Activated CD8-positive, alpha-beta T cell treated with anti-CD3 and anti-CD28 coated beads, Interleukin-2, amount 10 ng/mL, durations not matched to agents 7 days and 5 days (primary cell): ENCODE measurements at regions of chr1 and their contacts with region 1.

Region 1: DNA sequence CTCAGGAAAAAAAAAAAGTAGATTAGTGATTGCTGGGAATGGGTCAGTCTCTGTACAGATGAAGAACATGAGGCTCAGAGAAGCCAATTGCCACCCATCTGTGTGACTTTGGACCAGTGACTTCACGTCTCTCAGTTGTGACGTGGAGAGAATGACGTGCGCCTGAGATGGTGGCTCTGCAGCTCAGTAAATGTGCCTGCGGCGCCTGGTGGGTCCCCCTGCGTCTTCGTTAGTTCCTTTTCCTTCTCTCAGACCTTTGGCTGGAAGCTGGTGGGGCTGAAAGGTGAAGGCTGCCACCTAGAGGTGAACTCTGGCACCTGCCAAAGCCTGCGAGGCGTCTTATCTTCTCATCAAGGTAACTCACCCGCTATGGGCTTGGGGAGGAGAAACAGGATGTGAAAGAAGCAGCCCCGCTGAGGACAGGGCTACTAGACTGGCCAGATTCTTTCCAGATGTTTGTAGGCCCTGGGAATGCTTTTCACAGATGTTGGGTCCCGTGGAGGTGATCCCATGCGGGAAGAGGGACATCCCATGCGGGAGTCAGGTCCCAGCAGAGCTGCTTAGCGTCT is 8.7 kb upstream of the E2F2 start:
- DNase-seq: peak; percentile 97
- ATAC-seq: peak; percentile 97
- H3K4me3 Mint-ChIP-seq: peak overlapping the region; percentile 5
- H3K27ac Mint-ChIP-seq: peak overlapping the region; percentile 64
- H3K4me1 Mint-ChIP-seq: peaks cover 21% of the 10 kb centered on the region
- H3K27me3 Mint-ChIP-seq: no peaks in the 10 kb centered on the region

Region 2: DNA sequence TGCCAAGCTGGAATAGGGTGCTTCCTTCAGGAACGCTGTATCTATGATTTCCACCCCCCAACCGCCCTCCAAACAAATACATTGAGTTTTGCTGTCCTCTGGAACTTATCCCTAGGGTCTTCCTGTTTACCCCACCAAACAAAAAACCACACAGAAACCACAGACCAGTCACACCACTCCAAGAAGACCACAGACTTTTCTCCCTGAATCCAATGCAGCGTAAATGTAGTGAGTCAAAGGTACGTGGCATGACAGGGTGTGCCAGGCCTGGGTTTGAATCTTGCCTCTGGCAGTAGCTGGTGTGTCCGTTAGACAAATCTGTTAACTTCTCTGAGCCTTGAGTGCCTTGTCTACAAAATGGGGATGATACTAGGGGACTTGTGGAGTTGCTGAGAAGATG is 83.6 kb before region 1 on chr1:
- CTCF ChIA-PET with region 1: no interaction called
- POLR2A ChIA-PET with region 1: no interaction called
- DNase-seq: no peak
- ATAC-seq: no peak
- H3K4me3 Mint-ChIP-seq: no peak overlapping the region
- H3K27ac Mint-ChIP-seq: no peak overlapping the region
- H3K4me1 Mint-ChIP-seq: peaks cover 18% of the 10 kb centered on the region
- H3K27me3 Mint-ChIP-seq: peaks cover 15% of the 10 kb centered on the region

Region 3: DNA sequence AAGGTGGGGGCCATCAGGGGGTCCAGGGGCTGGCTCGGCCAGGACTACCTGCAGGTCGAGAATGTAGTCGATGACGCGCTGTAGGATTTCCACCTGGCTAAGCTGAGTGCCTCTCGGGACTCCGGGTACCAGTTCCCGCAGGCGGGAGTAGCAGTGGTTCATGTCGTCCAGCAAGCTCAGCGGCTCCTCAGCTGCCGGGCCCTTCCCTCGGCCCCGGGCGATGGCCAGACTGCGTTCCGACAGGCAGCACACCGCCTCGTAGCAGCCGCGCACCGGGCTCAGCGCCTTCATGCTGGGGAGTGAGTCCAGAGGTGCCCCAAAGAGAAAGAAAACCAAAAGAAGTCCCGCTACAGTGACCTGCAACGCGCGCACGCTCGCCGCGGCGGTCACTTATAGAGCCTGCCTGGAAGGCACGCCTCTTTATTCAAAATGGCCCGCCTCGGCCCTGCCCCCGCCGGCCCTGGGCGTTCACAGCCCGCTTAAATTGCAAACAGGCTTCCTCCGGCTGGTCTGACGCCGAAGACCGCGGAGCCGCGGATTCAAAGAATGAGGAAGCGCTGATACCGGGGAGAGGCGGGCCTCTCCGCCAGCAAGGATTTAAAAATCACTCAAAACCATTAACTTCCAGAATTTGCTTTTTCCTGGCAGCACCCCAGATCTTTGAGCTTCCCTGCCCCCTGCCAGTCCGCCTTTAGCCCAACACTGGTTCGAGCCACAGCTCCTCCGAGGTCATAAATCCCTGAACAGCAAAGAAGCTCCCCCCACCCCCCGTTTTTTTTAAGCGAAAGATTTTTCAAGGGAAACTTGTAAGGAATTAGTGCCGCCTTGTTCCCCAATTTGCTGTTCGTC is 19.6 kb after region 1 on chr1 and contains the start of gene ID3:
- CTCF ChIA-PET with region 1: interaction called, 36 read pairs
- POLR2A ChIA-PET with region 1: interaction called, 3 read pairs
- DNase-seq: peak; percentile 97
- ATAC-seq: peak; percentile 74
- H3K4me3 Mint-ChIP-seq: peak within 1 kb of the TSS; percentile 95
- H3K27ac Mint-ChIP-seq: peak within 1 kb of the TSS; percentile 87
- H3K4me1 Mint-ChIP-seq: peaks cover 70% of the 10 kb centered on the region
- H3K27me3 Mint-ChIP-seq: peaks cover 34% of the 10 kb centered on the region
- total RNA-seq, gene ID3: 31.4 to 34.4 TPM

Region 4: GRCh38 chr1:23598424-23598823 is 58.6 kb after region 1 on chr1:
- CTCF ChIA-PET with region 1: interaction called, 14 read pairs
- POLR2A ChIA-PET with region 1: no interaction called
- DNase-seq: no peak
- ATAC-seq: no peak
- H3K4me3 Mint-ChIP-seq: no peak overlapping the region
- H3K27ac Mint-ChIP-seq: peak overlapping the region; percentile 51
- H3K4me1 Mint-ChIP-seq: peaks cover 93% of the 10 kb centered on the region
- H3K27me3 Mint-ChIP-seq: no peaks in the 10 kb centered on the region

Region 5: DNA sequence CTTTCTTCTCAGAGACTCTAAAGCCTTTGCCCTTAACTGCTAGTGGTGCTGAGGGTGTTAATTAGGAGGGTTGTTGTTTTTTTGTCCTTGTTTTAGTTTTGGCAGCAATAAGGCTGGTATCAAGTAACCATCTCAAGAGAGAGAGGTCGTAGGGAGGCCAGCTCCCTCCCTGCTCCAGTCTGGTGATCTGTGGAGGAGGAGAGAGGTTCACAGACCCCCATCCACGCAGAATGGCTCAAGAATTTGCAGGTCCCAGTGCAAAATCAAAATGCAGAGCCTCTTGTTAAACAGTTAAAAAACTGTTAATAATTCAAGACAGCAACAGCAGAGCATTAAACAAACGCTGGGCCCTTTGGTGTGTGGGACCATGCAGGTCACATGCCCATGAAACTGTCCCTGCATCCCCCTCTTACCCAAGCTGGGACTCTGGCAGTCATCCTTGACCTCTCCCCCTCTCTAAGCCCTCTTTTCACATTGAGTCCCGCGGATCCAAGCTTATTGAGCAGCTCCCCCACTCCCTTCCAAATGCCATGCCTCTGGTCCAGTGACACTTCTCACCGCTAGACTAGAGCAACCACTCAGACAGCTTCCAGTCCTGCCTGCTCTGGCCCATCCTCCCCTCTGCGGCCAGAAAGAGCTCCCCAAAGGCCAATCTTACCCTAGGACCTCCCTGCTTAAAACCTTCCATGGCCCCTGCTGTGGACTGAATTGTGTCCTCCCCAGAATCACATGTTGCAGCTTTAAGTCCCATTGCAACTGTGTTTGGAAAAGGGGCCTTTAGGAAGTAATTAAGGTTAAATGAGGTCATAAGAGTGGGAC is 104.2 kb after region 1 on chr1:
- CTCF ChIA-PET with region 1: interaction called, 1,062 read pairs
- POLR2A ChIA-PET with region 1: no interaction called
- DNase-seq: no peak
- ATAC-seq: no peak
- H3K4me3 Mint-ChIP-seq: no peak overlapping the region
- H3K27ac Mint-ChIP-seq: no peak overlapping the region
- H3K4me1 Mint-ChIP-seq: no peaks in the 10 kb centered on the region
- H3K27me3 Mint-ChIP-seq: no peaks in the 10 kb centered on the region